AG04449 (cell line): ENCODE measurements at regions of chr2 and their contacts with region 1.

Region 1: DNA sequence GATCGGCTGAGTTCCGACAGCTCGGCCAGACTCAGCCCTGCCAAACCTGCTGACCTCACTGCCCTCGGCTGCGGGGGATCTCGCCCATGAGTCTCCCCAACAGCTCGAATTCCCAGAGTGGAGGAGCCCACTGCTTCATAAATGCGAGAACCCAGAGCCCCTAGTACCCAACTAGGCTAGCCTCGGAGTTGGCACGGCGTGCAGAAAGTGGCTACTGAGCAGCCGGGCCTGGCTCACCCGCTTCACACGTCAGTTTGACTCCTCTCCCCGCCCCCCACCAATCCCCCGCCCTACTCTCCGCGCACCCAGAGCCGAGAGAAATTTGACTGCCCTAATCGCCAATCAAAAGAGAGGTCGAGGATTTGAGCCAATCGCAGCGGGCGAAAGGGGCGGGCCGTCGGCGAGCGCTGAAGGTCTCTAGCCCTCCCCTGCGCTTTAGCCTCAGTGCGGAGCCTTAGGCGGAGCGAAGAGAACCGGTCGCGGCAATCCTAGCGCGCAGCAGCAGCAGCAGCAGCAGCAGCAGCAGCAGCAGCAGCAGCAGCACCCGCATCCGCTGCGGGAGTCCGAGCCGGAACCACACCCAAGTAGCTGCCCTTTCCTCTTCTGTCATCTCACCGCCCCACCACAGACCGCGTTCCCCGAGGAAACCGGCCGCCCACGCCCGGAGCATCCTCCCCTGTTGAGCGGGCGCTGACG is at the start of gene GLS:
- DNase-seq: no peak
- H3K4me3 ChIP-seq: peak within 1 kb of the TSS; percentile 70
- CTCF ChIP-seq: no peak

Region 2: DNA sequence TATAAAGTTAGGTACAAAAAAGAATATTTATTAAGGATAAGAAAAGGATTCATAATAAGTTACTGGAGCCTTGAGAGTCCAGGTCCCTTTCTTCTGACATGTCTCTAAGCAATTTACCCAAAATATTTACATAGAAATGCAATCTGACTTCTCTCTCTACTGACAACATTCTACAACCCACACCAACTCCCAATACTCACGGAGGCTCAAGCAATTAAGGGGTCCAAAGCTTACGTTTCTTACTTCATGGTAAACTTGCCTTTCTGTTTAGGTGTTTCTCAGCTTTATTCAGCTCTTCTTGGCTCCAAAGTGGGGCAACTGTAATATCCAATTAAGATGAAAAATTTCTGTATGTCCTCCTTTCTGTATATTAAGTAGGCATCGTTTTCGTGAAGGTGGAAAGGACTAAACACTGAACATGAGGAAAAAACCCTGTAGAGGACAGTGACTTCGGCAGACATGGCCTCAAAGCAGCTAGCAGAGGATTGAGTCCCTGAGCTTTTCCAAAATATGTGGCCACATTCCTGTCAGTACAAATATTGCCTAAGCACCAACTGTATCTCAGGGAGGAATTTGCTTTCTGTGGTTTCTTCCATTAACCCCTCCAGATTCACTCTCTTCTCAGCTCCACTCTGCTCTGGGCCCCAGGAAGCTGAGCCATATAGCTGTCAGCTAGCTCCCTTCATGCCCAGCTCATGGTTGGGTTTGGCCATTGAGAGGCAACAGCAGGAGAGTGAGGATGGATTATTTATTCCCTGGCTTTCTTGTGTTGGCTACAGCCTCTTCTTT is 67.8 kb before region 1 on chr2:
- CTCF ChIA-PET with region 1: no interaction called
- POLR2A ChIA-PET with region 1: interaction called, 13 read pairs
- DNase-seq: no peak
- H3K4me3 ChIP-seq: no peak overlapping the region
- CTCF ChIP-seq: no peak

Region 3: GRCh38 chr2:190835303-190835930 is 45.1 kb before region 1 on chr2:
- CTCF ChIA-PET with region 1: no interaction called
- POLR2A ChIA-PET with region 1: interaction called, 14 read pairs
- DNase-seq: peak; percentile 59
- H3K4me3 ChIP-seq: no peak overlapping the region
- CTCF ChIP-seq: no peak

Region 4: DNA sequence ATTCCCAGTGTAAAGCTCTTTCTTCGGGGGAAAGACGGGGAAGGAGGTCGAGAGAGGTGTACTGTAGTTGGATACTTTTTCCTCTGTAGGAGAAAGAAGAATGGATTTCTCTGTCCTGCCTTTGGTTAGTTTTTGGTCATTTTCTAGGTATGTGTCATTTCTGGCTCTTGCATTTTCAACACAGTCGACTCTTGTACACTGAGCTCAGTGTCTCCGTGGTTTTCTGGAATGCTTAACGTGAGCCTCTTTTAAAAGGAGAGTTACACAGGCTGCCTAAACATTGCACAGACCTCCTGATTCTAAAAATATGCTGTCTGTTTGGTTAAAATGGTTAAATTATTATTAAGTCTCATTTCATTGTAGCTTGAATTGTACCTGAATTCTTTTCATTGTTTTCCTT is 21.7 kb before region 1 on chr2:
- CTCF ChIA-PET with region 1: interaction called, 4 read pairs
- POLR2A ChIA-PET with region 1: interaction called, 110 read pairs
- DNase-seq: peak; percentile 66
- H3K4me3 ChIP-seq: no peak overlapping the region
- CTCF ChIP-seq: no peak

Region 5: DNA sequence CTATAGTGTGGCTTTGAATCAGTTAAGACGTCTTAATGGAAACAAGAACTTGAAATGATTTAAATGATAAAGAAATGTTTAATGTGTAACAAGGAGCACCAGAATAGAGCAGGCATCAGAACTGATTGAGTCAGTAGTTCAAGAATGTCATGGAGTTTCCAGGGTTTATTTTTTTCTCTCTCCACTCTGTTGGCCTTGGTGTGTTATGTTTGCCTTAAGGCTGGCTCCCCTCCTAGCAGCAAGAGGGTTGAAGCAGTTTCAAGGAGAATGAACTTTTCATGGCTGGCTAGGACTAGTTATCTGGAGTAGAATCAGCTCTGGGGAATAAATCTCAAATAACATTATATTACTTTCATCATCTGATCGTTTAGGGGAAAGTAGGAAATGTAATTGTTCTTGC is 13.3 kb before region 1 on chr2:
- CTCF ChIA-PET with region 1: interaction called, 5 read pairs
- POLR2A ChIA-PET with region 1: interaction called, 110 read pairs
- DNase-seq: peak; percentile 66
- H3K4me3 ChIP-seq: no peak overlapping the region
- CTCF ChIP-seq: no peak

Region 6: DNA sequence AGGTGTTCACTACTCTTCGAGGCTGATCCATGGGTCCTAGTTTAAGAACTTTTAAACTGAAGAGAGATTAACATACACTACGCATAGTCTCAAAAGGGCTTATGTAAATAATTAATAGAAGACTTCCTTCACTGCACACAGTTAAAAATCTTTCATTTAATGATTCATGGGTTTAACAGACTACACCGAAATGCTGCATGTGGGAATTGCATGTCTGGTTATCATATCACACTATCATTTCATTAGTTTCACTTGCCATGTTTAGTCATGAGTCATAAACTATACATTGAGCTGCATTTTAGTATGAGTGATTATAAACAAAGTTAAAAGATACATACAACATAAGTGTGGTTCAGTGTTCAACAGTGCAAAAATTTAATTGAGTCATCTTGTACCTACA is 31.3 kb after region 1 on chr2:
- CTCF ChIA-PET with region 1: no interaction called
- POLR2A ChIA-PET with region 1: no interaction called
- DNase-seq: no peak
- H3K4me3 ChIP-seq: no peak overlapping the region
- CTCF ChIP-seq: no peak